ENCODE measurements at regions of chr17 and their contacts with region 1.

Region 1: GRCh38 chr17:57552114-57552624 is 192.9 kb downstream of the CCDC182 start:
- DNase-seq: peak; percentile 81
- ATAC-seq: peak; percentile 31
- H3K4me3 ChIP-seq: peak overlapping the region in 4 of 5 experiments; percentile 32 to 55 (median 48)
- H3K4me3 Mint-ChIP-seq: peak overlapping the region; percentile 81
- H3K27ac ChIP-seq: peak overlapping the region; percentile 96 to 97
- H3K27ac Mint-ChIP-seq: peak overlapping the region; percentile 87
- H3K4me1 ChIP-seq: peaks cover 94 to 100% of the 10 kb centered on the region in 2 donors
- H3K4me1 Mint-ChIP-seq: peaks cover 98% of the 10 kb centered on the region
- H3K27me3 ChIP-seq: no peaks in the 10 kb centered on the region
- H3K27me3 Mint-ChIP-seq: no peaks in the 10 kb centered on the region
- CTCF ChIP-seq: peak; percentile 77

Region 2: DNA sequence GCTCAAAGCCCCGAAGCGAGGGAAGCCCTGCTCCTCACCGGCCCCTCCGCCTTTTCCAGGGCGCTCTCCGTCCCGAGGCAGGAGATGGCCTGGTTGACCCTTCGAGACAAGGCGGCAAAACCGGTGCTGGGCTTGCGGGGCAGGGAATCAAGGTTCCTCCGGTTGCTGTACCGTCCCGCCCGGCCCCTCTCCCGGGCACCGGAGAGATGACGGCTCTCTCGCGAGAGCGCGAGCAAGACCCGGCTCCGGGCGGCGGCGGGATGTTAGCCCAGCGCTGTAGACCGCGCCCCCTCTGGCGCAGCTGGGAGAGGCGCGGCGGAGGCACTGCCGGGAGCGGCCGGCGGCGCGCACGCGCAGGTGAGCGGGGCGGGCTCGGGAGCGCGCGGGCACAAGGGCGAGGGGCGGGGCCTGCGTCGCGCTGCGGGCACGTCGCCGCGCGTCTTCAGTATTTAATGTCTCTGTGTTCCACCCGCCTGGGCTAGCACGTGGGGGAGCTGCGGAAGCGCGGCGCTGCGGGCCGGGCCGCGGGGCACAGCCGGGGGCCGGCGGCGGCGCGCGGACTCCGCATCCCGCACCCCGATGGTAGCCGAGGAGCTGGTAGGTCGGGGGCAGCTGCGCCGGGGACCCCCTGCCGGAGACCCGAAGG is 467.2 kb before region 1 on chr17 and contains the start of gene AKAP1:
- CTCF ChIA-PET with region 1: no interaction called
- POLR2A ChIA-PET with region 1: no interaction called
- intact Hi-C with region 1: no loop called
- DNase-seq: peak; percentile 97
- ATAC-seq: peak; percentile 85
- H3K4me3 ChIP-seq: peak within 1 kb of the TSS; percentile 71 to 95 (median 85)
- H3K4me3 Mint-ChIP-seq: peak within 1 kb of the TSS; percentile 95
- H3K27ac ChIP-seq: peak within 1 kb of the TSS; percentile 77 to 86
- H3K27ac Mint-ChIP-seq: peak within 1 kb of the TSS; percentile 91
- H3K4me1 ChIP-seq: peaks cover 14 to 16% of the 10 kb centered on the region in 2 donors
- H3K4me1 Mint-ChIP-seq: peaks cover 20% of the 10 kb centered on the region
- H3K27me3 ChIP-seq: peaks cover 0 to 3% (median 0%) of the 10 kb centered on the region in 4 experiments
- H3K27me3 Mint-ChIP-seq: no peaks in the 10 kb centered on the region
- CTCF ChIP-seq: no peak
- total RNA-seq, gene AKAP1: 20.1 and 27.1 TPM in 2 replicates

Region 3: GRCh38 chr17:57440522-57441485 is 111.4 kb before region 1 on chr17:
- CTCF ChIA-PET with region 1: no interaction called
- POLR2A ChIA-PET with region 1: interaction called, 4 read pairs
- intact Hi-C with region 1: loop called (anchors 5 kb)
- DNase-seq: peak; percentile 36
- ATAC-seq: peak; percentile 73
- H3K4me3 ChIP-seq: no peak overlapping the region
- H3K4me3 Mint-ChIP-seq: peak overlapping the region; percentile 40
- H3K27ac ChIP-seq: no peak overlapping the region
- H3K27ac Mint-ChIP-seq: peak overlapping the region; percentile 82
- H3K4me1 ChIP-seq: peaks cover 66 to 69% of the 10 kb centered on the region in 2 donors
- H3K4me1 Mint-ChIP-seq: peaks cover 89% of the 10 kb centered on the region
- H3K27me3 ChIP-seq: no peaks in the 10 kb centered on the region
- H3K27me3 Mint-ChIP-seq: no peaks in the 10 kb centered on the region
- CTCF ChIP-seq: peak; percentile 13

Region 4: GRCh38 chr17:57535249-57535966 is 16.8 kb before region 1 on chr17:
- CTCF ChIA-PET with region 1: interaction called, 13 read pairs
- POLR2A ChIA-PET with region 1: interaction called, 3 read pairs
- intact Hi-C with region 1: no loop called
- DNase-seq: no peak
- ATAC-seq: no peak
- H3K4me3 ChIP-seq: no peak overlapping the region
- H3K4me3 Mint-ChIP-seq: no peak overlapping the region
- H3K27ac ChIP-seq: no peak overlapping the region
- H3K27ac Mint-ChIP-seq: no peak overlapping the region
- H3K4me1 ChIP-seq: peaks cover 33 to 40% of the 10 kb centered on the region in 2 donors
- H3K4me1 Mint-ChIP-seq: peaks cover 41% of the 10 kb centered on the region
- H3K27me3 ChIP-seq: no peaks in the 10 kb centered on the region
- H3K27me3 Mint-ChIP-seq: no peaks in the 10 kb centered on the region
- CTCF ChIP-seq: no peak

Region 5: DNA sequence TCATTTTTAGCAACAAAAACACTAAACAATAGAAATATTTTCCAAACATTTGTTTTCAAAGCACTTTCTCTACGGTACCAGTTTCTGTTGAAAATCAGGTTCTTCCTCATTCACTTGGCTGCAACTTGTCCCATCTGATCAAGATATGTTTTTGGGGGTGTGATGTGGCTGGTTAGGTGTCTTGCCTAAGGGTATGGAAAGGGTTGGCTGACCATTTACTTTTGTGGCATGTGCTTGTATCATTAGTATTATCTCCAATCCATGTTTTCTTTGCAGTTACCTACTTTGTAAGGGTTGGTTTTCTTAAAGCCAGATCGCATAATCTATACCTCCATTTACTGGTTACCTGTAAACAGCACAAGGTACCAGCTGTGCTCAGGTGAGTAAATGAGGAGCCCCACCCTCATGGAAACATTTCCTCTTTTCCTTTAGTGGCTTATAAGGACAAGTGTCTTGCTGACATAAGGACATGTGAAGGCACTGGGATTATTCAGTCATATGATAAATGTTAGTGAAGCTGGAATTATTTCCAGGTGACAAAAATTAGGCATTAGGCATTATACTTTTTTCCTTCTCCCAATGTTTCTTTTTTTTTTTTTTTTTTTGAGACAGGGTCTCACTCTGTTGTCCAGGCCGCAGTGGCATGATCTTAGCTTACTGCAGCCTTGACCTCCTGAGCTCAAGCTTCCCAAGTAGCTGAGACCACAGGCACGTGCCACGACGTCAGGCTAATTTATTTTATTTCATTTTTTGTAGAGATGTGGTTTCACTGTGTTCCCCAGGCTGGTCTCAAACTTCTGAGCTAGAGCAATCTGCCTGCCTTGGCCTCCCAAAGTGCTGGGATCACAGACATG is 31.0 kb after region 1 on chr17:
- CTCF ChIA-PET with region 1: interaction called, 5 read pairs
- POLR2A ChIA-PET with region 1: no interaction called
- intact Hi-C with region 1: loop called (anchors 2 kb)
- DNase-seq: no peak
- ATAC-seq: no peak
- H3K4me3 ChIP-seq: no peak overlapping the region
- H3K4me3 Mint-ChIP-seq: no peak overlapping the region
- H3K27ac ChIP-seq: no peak overlapping the region
- H3K27ac Mint-ChIP-seq: no peak overlapping the region
- H3K4me1 ChIP-seq: peaks cover 4 to 7% of the 10 kb centered on the region in 2 donors
- H3K4me1 Mint-ChIP-seq: peaks cover 8% of the 10 kb centered on the region
- H3K27me3 ChIP-seq: no peaks in the 10 kb centered on the region
- H3K27me3 Mint-ChIP-seq: no peaks in the 10 kb centered on the region
- CTCF ChIP-seq: no peak

Region 6: DNA sequence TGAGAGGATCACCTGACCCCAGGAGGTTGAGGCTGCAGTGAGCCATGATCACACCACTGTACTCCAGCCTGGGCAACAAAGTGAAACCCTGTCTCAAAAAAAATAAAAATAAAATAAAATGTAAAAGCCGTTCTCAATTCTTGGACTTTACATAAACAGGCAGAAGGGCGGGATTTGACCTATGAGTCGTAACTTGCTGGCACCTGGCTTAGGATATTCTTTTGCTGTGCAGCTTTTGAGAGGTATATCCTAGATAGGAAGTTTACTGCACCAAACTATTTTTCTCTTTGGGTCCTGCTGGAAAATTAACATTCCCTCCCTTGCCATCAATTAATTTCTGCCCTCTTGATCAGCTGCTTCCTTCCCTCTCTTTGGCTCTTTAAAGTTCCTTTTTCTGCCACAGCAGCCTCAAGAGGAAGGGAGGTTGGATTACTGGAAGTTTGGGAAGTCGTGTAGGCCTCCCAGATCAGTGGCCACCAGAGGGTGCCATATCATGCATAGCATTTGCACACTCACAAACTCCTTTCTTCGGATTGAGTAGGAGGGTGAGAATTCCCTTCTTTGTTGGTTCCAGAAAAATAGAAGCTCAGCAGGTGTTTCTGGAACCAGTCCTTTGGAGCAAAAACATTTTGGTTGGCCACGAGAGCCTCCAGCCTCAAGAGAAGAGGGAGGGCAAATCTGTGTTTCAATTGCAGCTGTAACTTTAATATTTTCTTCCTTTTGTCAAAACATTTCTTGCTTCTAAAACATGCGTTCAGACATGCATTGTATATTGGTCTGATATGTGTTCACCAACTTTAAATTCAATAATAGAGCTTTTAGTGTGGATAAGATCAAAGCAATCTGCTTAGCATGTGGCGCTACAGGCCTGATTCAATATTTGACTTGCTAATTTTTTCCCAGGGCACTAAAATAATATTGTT is 45.6 kb after region 1 on chr17:
- CTCF ChIA-PET with region 1: interaction called, 26 read pairs
- POLR2A ChIA-PET with region 1: interaction called, 3 read pairs
- intact Hi-C with region 1: no loop called
- DNase-seq: peak; percentile 41
- ATAC-seq: no peak
- H3K4me3 ChIP-seq: no peak overlapping the region
- H3K4me3 Mint-ChIP-seq: no peak overlapping the region
- H3K27ac ChIP-seq: no peak overlapping the region
- H3K27ac Mint-ChIP-seq: peak overlapping the region; percentile 69
- H3K4me1 ChIP-seq: peaks cover 21 to 26% of the 10 kb centered on the region in 2 donors
- H3K4me1 Mint-ChIP-seq: peaks cover 31% of the 10 kb centered on the region
- H3K27me3 ChIP-seq: no peaks in the 10 kb centered on the region
- H3K27me3 Mint-ChIP-seq: no peaks in the 10 kb centered on the region
- CTCF ChIP-seq: peak; percentile 68

Region 7: DNA sequence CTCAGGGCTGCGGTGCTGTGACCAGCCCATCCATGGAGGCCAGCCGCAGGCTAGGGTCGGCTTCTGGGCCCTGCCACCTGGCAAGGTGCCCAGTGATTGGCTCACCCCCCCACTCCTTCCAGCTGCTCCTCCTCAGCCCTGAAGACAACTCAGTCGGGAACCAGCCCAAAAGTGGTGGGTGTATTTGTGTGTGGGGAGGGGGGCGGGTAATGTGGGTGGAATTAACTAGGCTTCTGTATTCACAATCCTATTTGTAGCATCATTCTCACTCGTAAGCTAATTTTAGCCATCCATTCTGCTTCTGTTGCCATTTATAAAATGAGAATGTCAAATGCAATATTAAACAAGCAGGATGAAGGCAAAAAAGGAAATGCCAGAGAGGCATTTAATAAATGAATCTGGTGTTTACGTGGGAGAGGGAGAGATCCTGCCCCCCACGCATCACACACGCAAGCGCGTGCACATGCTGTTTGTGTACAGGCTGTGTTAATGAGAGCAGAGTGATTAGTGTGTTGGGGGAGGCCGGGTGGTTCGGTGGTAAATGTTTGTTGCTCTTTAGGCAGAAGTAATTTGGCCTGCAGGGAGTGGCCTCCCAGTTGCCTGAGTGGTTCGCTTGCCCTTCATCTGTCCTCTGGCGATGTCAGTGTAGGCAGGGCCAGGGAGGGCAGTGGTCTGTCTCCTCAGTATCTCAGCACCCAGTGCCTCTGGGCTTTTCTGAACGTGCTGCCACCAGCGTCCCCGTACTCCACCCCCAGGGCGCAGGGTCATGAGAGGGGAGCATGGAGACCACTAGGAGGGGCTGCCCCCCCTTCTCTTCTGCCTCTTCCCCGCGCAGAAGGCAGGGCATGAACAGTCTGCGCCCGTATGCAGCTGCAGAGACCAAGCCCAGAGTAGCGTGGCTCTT is 52.9 kb after region 1 on chr17:
- CTCF ChIA-PET with region 1: interaction called, 26 read pairs
- POLR2A ChIA-PET with region 1: interaction called, 8 read pairs
- intact Hi-C with region 1: loop called (anchors 1 kb)
- DNase-seq: peak; percentile 88
- ATAC-seq: peak; percentile 77
- H3K4me3 ChIP-seq: peak overlapping the region in 1 of 5 experiments; percentile 42
- H3K4me3 Mint-ChIP-seq: peak overlapping the region; percentile 79
- H3K27ac ChIP-seq: peak overlapping the region; percentile 73 to 78
- H3K27ac Mint-ChIP-seq: peak overlapping the region; percentile 96
- H3K4me1 ChIP-seq: peaks cover 44 to 60% of the 10 kb centered on the region in 2 donors
- H3K4me1 Mint-ChIP-seq: peaks cover 62% of the 10 kb centered on the region
- H3K27me3 ChIP-seq: no peaks in the 10 kb centered on the region
- H3K27me3 Mint-ChIP-seq: no peaks in the 10 kb centered on the region
- CTCF ChIP-seq: peak; percentile 41

Region 8: GRCh38 chr17:57629470-57629869 is 77.3 kb after region 1 on chr17:
- CTCF ChIA-PET with region 1: interaction called, 10 read pairs
- POLR2A ChIA-PET with region 1: interaction called, 3 read pairs
- intact Hi-C with region 1: loop called (anchors 1 kb)
- DNase-seq: peak; percentile 84
- ATAC-seq: peak; percentile 88
- H3K4me3 ChIP-seq: no peak overlapping the region
- H3K4me3 Mint-ChIP-seq: peak overlapping the region; percentile 71
- H3K27ac ChIP-seq: peak overlapping the region; percentile 63 to 66
- H3K27ac Mint-ChIP-seq: peak overlapping the region; percentile 92
- H3K4me1 ChIP-seq: peaks cover 37 to 52% of the 10 kb centered on the region in 2 donors
- H3K4me1 Mint-ChIP-seq: peaks cover 50% of the 10 kb centered on the region
- H3K27me3 ChIP-seq: no peaks in the 10 kb centered on the region
- H3K27me3 Mint-ChIP-seq: no peaks in the 10 kb centered on the region
- CTCF ChIP-seq: no peak

Measured in B cell (primary cell).